CD8-positive, alpha-beta memory T cell (primary cell): ENCODE measurements at regions of chr2 and their contacts with region 1.

Region 1: DNA sequence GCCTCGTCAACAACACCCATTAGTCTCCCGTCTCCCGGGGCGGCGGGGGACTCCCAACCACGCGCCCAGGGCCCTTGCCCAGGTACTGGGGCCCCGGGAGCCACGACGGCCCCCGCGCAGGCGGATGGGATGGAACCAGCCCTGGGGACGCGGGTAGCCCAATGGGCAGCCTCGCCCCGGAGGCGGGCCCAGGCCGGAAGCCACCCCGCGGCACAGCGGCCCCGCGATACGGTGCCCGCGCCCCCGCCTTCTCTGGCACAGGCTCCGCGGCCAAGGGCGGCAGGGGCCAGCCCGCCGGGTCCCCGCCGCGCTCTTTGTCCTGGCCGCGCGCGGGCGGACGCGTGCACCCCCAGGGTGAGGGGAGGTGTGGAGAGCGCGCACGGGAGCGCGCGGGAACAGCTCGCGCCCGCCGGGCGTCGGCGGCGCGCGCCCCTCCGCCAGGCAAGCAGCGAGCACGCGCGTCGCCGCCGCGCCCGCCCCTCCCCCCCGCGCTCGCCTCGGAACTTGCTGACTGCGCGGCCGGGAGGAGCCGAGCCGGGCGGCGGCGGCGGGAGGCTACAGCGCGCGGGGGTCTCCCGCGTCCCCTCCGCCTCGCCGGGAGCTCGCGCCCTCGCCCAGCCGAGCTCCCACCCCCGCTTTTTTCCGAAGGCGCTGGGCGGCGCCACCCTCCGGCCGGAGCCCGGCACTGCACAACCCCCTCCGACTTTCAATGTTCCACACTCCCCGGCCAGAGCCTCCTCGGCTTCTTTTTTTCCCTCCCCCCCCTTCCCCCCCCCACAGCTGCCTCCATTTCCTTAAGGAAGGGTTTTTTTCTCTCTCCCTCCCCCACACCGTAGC is at the start of gene UBE2E3:
- DNase-seq: peak; percentile 69 to 86 (median 78)
- H3K4me3 ChIP-seq: peak within 1 kb of the TSS; percentile 62
- H3K4me3 Mint-ChIP-seq: peak within 1 kb of the TSS; percentile 86 to 100 (median 98)
- H3K27ac ChIP-seq: peak within 1 kb of the TSS; percentile 70
- H3K27ac Mint-ChIP-seq: peak within 1 kb of the TSS; percentile 89 to 99 (median 98)
- H3K4me1 ChIP-seq: peaks cover 30% of the 10 kb centered on the region
- H3K4me1 Mint-ChIP-seq: peaks cover 35 to 52% (median 47%) of the 10 kb centered on the region in 3 donors
- H3K27me3 ChIP-seq: no peaks in the 10 kb centered on the region
- H3K27me3 Mint-ChIP-seq: no peaks in the 10 kb centered on the region
- total RNA-seq, gene UBE2E3: 36.5 to 38.0 TPM

Region 2: DNA sequence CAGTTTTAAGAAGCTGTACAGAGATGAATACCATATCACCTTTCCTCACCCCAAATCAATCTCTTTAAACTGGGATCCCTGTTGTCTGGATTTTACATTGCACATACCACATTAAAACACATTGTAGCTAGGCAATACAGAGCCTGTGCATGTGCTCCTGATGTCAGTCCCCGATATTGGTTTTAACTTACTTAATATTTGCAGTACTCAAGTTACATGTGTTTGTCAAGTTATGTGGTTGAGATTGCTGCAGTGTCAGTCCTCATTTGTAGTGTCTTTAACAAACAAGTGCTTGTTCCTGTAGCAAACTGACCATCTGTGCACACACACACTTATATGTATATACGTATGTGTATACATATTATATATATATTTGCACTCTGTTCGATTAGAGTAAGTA is 10.3 kb before region 1 on chr2:
- CTCF ChIA-PET with region 1: interaction called, 21 read pairs
- POLR2A ChIA-PET with region 1: interaction called, 6 read pairs
- DNase-seq: no peak
- H3K4me3 ChIP-seq: no peak overlapping the region
- H3K4me3 Mint-ChIP-seq: no peak overlapping the region
- H3K27ac ChIP-seq: no peak overlapping the region
- H3K27ac Mint-ChIP-seq: no peak overlapping the region
- H3K4me1 ChIP-seq: no peaks in the 10 kb centered on the region
- H3K4me1 Mint-ChIP-seq: no peaks in the 10 kb centered on the region
- H3K27me3 ChIP-seq: no peaks in the 10 kb centered on the region
- H3K27me3 Mint-ChIP-seq: peaks cover 0 to 8% of the 10 kb centered on the region in 2 donors

Region 3: DNA sequence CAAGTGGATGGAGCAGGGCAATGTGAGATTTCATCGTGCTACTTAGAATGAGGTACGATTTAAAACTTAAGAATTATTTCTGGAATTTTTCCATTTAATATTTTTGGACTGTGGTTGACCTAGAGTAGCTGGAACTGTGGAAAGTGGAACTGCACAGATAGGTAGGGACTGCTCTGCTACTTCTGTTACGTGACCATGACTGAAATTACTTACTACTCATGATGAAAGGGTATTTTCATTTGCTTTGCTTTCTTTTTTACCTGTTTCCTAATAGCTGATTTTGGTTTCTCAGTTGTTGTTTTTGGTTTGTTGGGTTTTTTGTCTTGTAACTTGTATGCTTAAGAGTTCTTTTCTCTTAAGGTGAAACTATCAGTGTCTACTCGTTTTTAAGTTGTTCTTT is 11.5 kb after region 1 on chr2:
- CTCF ChIA-PET with region 1: interaction called, 10 read pairs
- POLR2A ChIA-PET with region 1: interaction called, 4 read pairs
- DNase-seq: no peak
- H3K4me3 ChIP-seq: no peak overlapping the region
- H3K4me3 Mint-ChIP-seq: no peak overlapping the region
- H3K27ac ChIP-seq: no peak overlapping the region
- H3K27ac Mint-ChIP-seq: no peak overlapping the region
- H3K4me1 ChIP-seq: no peaks in the 10 kb centered on the region
- H3K4me1 Mint-ChIP-seq: peaks cover 16 to 57% (median 39%) of the 10 kb centered on the region in 3 donors
- H3K27me3 ChIP-seq: no peaks in the 10 kb centered on the region
- H3K27me3 Mint-ChIP-seq: no peaks in the 10 kb centered on the region

Region 4: DNA sequence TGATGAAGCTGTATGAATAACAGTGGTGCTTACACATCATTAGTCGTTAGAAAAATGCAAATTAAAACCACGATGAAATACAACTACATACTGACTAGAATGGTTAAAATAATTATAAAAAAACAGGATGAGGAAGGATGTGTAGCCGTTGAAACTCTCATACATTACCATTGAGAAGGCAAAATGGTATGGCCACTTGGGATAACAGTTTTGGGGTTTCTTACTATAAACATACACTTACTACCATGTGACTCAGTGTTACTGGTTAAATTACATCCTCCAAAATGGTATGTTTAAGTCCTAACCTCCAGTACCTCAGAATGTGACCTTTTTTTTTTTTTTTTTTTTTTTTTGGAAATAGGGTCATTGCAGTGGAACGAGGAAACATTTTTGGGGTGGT is 58.5 kb after region 1 on chr2:
- CTCF ChIA-PET with region 1: interaction called, 3 read pairs
- POLR2A ChIA-PET with region 1: interaction called, 15 read pairs
- DNase-seq: no peak
- H3K4me3 ChIP-seq: no peak overlapping the region
- H3K4me3 Mint-ChIP-seq: no peak overlapping the region
- H3K27ac ChIP-seq: no peak overlapping the region
- H3K27ac Mint-ChIP-seq: no peak overlapping the region
- H3K4me1 ChIP-seq: peaks cover 6% of the 10 kb centered on the region
- H3K4me1 Mint-ChIP-seq: peaks cover 19 to 32% (median 32%) of the 10 kb centered on the region in 3 donors
- H3K27me3 ChIP-seq: no peaks in the 10 kb centered on the region
- H3K27me3 Mint-ChIP-seq: no peaks in the 10 kb centered on the region

Region 5: GRCh38 chr2:181058378-181059269 is 78.3 kb after region 1 on chr2:
- CTCF ChIA-PET with region 1: interaction called, 19 read pairs
- POLR2A ChIA-PET with region 1: no interaction called
- DNase-seq: peak in 4 of 5 donors; percentile 22 to 56 (median 37)
- H3K4me3 ChIP-seq: no peak overlapping the region
- H3K4me3 Mint-ChIP-seq: no peak overlapping the region
- H3K27ac ChIP-seq: no peak overlapping the region
- H3K27ac Mint-ChIP-seq: no peak overlapping the region
- H3K4me1 ChIP-seq: no peaks in the 10 kb centered on the region
- H3K4me1 Mint-ChIP-seq: peaks cover 9 to 14% (median 9%) of the 10 kb centered on the region in 3 donors
- H3K27me3 ChIP-seq: no peaks in the 10 kb centered on the region
- H3K27me3 Mint-ChIP-seq: no peaks in the 10 kb centered on the region